ENCODE measurements at regions of chr7 and their contacts with region 1.

Region 1: GRCh38 chr7:140003913-140004382 is 58.8 kb downstream of the PARP12 start:
- DNase-seq: peak; percentile 82
- H3K4me3 Mint-ChIP-seq: no peak overlapping the region
- H3K27ac Mint-ChIP-seq: no peak overlapping the region
- H3K4me1 Mint-ChIP-seq: peaks cover 4% of the 10 kb centered on the region
- H3K27me3 Mint-ChIP-seq: peaks cover 2% of the 10 kb centered on the region

Region 2: DNA sequence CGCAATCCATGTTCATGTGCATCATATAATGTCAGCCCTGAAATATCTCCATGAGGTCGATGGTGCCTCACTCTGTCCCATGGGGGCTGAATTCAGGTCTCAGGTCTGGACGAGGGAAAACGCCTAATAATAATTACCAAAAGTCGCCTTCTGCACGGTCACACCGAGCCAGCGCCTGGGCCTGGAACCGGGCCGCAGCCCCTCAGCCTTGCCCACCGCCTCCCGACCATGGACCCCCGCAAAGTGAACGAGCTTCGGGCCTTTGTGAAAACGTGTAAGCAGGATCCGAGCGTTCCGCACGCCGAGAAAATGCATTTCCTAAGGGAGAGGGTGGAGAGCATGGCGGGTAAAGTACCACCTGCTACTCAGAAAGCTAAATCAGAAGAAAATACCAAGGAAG is 501.7 kb before region 1 on chr7:
- intact Hi-C with region 1: loop called (anchors 1 kb)
- DNase-seq: no peak
- H3K4me3 Mint-ChIP-seq: no peak overlapping the region
- H3K27ac Mint-ChIP-seq: no peak overlapping the region
- H3K4me1 Mint-ChIP-seq: peaks cover 5% of the 10 kb centered on the region
- H3K27me3 Mint-ChIP-seq: peaks cover 7% of the 10 kb centered on the region

Region 3: DNA sequence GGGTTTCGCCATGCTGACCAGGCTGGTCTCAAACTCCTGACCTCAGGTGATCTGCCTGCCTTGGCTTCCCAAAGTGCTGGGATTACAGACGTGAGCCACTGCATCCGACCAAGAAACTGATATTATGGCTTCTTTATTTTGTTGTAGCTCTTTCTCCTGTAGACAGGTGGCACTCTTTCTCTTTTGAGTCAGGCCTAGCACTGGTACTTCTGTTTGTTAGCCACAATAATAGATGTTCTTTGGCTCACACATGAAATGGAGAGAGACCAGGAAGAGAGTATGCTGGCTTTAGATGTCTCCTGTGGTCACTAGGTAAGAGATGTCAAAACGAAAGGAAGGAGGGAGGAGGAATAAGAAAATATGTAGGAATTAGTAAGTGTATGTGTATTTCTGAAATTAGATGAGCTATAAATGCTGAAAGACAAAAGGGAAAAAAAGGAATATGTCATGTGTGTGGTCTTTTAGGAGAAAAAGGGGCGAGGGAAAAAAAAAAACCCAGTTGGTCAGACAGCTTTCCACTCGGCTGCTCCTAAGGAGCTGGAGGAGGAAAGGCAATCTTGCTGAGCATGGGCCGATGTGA is 401.7 kb before region 1 on chr7:
- intact Hi-C with region 1: loop called (anchors 1 kb)
- DNase-seq: peak; percentile 73
- H3K4me3 Mint-ChIP-seq: no peak overlapping the region
- H3K27ac Mint-ChIP-seq: no peak overlapping the region
- H3K4me1 Mint-ChIP-seq: no peaks in the 10 kb centered on the region
- H3K27me3 Mint-ChIP-seq: no peaks in the 10 kb centered on the region

Region 4: GRCh38 chr7:139620676-139621344 is 383.1 kb before region 1 on chr7:
- intact Hi-C with region 1: loop called (anchors 1 kb)
- DNase-seq: peak; percentile 87
- H3K4me3 Mint-ChIP-seq: no peak overlapping the region
- H3K27ac Mint-ChIP-seq: no peak overlapping the region
- H3K4me1 Mint-ChIP-seq: peaks cover 21% of the 10 kb centered on the region
- H3K27me3 Mint-ChIP-seq: no peaks in the 10 kb centered on the region

Region 5: GRCh38 chr7:139645572-139646523 is 358.1 kb before region 1 on chr7:
- intact Hi-C with region 1: loop called (anchors 1 kb)
- DNase-seq: peak; percentile 94
- H3K4me3 Mint-ChIP-seq: no peak overlapping the region
- H3K27ac Mint-ChIP-seq: no peak overlapping the region
- H3K4me1 Mint-ChIP-seq: peaks cover 51% of the 10 kb centered on the region
- H3K27me3 Mint-ChIP-seq: no peaks in the 10 kb centered on the region

Region 6: DNA sequence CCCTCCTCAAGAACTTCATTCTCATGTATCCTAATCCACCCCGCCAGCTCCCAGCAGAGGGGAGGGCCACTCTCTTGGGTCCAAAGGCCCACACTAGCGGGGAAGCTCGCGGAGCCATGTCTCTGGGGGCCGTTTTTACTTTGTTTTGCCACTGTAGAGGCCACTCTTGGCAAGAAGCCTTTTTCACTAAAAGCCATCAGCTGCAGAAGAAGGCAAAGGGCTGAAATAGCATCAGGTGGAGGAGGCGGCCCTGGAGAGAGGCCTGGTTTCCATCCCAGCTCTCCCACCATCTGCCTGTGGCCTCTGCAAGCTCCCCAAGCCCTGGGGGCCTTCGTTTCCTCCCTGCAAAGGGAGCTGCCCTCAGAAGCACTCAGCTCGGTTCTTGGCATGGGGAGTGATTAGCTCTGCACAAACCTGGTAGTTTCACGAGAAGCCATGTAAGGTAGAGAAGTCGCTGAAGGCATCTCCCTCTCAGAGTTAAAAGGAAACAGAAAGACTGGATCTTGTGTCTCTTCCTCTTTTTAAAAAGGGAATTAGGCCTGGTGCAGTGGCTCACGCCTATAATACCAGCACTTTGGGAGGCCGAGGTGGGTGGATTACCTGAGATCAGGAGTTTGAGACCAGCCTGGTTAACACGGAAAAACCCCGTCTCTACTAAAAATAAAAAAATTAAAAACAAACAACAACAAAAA is 11.4 kb before region 1 on chr7:
- intact Hi-C with region 1: no loop called
- DNase-seq: no peak
- H3K4me3 Mint-ChIP-seq: no peak overlapping the region
- H3K27ac Mint-ChIP-seq: no peak overlapping the region
- H3K4me1 Mint-ChIP-seq: no peaks in the 10 kb centered on the region
- H3K27me3 Mint-ChIP-seq: no peaks in the 10 kb centered on the region